PC-3 (cell line): ENCODE measurements at regions of chr6 and their contacts with region 1.

Region 1: GRCh38 chr6:52162940-52163908 is 23.0 kb upstream of the IL17A start:
- DNase-seq: peak; percentile 75
- ATAC-seq: peak; percentile 86
- H3K4me3 ChIP-seq: no peak overlapping the region
- H3K27ac ChIP-seq: no peak overlapping the region
- H3K4me1 ChIP-seq: no peaks in the 10 kb centered on the region
- H3K27me3 ChIP-seq: 0 out of 2 replicates have a peak, but pooled peaks cover 4% of the 10 kb centered on the region
- CTCF ChIP-seq: peak; percentile 89

Region 2: GRCh38 chr6:51450248-51450957 is 712.8 kb before region 1 on chr6:
- CTCF ChIA-PET with region 1: no interaction called
- POLR2A ChIA-PET with region 1: no interaction called
- intact Hi-C with region 1: no loop called
- DNase-seq: no peak
- ATAC-seq: no peak
- H3K4me3 ChIP-seq: no peak overlapping the region
- H3K27ac ChIP-seq: no peak overlapping the region
- H3K4me1 ChIP-seq: no peaks in the 10 kb centered on the region
- H3K27me3 ChIP-seq: peaks cover 36% of the 10 kb centered on the region
- CTCF ChIP-seq: no peak

Region 3: DNA sequence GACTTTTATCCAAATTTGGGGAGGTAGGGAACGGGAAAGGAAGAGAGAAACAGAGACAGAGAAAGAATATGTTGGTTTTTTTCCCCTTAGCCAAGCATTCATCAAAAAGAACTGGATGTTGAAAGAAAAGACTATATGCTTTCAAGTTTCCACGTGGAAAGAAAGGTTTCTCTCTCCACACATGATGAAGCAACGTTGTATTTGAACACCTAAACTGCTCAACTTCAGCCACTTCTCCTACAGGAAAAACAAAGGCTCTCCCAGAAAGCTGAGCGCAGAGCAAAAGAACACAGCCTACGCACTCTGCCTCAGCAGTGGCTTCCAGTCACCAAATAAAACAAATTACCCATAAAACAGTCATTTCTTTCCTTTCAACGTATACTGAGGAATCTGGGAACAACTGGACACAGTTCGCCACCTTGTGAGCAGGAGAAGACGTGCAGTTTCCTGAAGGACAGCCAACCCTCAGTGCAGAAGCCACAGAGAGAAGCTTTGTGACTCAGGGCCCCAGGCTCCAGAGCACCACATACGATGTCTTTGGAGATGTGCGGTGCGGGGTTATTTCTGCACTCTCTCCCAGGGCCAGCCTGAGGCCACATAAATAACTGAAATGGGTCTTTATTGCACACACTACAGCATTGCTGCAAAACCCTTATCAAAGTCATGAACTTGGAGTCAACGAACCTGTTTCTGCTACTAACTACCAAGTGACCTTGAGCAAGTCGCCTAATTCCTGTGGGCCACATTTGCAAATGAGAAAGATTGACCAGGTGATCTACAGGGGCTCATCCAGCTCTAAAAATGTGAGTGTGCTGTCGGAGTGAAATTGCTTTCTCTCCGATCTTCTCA is 71.0 kb after region 1 on chr6:
- CTCF ChIA-PET with region 1: interaction called, 3 read pairs
- POLR2A ChIA-PET with region 1: no interaction called
- intact Hi-C with region 1: loop called (anchors 1 kb)
- DNase-seq: peak; percentile 90
- ATAC-seq: peak; percentile 100
- H3K4me3 ChIP-seq: peak overlapping the region; percentile 40; the same call in 1 of the 2 replicates
- H3K27ac ChIP-seq: no peak overlapping the region
- H3K4me1 ChIP-seq: peaks cover 6% of the 10 kb centered on the region; the same call in 1 of the 2 replicates
- H3K27me3 ChIP-seq: peaks cover 19% of the 10 kb centered on the region
- CTCF ChIP-seq: peak; percentile 83

Region 4: GRCh38 chr6:52263709-52264540 is 100.7 kb after region 1 on chr6:
- CTCF ChIA-PET with region 1: no interaction called
- POLR2A ChIA-PET with region 1: no interaction called
- intact Hi-C with region 1: loop called (anchors 1 kb)
- DNase-seq: peak; percentile 76
- ATAC-seq: peak; percentile 62
- H3K4me3 ChIP-seq: no peak overlapping the region
- H3K27ac ChIP-seq: no peak overlapping the region
- H3K4me1 ChIP-seq: peaks cover 15% of the 10 kb centered on the region
- H3K27me3 ChIP-seq: no peaks in the 10 kb centered on the region
- CTCF ChIP-seq: peak; percentile 94

Region 5: DNA sequence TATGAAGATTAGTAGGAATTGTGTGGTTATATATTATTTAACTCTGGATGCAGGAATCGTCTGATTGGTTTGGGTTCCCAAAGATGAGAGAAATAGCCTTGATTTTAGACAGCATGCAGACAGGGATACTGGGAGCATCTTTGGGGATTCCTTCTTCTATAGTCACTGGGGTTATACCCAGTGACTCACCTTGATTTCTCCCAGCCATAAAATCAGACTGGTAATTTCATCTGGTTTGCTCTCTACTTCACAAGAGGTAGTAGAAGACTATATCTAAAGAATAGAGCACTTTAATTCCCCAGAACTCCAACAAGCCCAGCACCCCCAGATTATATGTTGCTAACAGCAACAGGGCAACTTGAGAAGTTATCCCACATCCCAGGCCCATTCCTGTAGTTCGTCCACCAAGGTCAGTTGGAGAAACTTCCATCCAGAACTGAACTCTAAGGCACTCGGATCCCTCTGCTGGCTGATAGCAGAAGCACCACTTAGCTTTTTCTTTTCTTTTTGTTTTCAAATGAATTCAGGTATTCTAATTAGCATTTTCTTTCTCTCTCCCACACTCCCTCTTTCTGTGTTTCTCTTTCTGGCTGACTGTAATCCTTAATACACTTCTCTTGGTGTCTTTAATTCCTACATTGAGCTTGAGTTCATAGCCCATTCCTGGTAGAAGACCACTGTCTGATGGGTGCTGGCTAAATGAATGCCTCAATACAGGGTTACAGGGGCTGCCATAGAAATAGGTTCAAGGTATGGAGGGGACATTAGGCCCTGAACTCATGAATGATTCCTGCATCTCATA is 236.5 kb after region 1 on chr6:
- CTCF ChIA-PET with region 1: no interaction called
- POLR2A ChIA-PET with region 1: no interaction called
- intact Hi-C with region 1: loop called (anchors 1 kb)
- DNase-seq: peak; percentile 72
- ATAC-seq: peak; percentile 83
- H3K4me3 ChIP-seq: no peak overlapping the region
- H3K27ac ChIP-seq: no peak overlapping the region
- H3K4me1 ChIP-seq: peaks cover 14% of the 10 kb centered on the region
- H3K27me3 ChIP-seq: no peaks in the 10 kb centered on the region
- CTCF ChIP-seq: peak; percentile 97

Region 6: GRCh38 chr6:52937908-52938307 is 774.7 kb after region 1 on chr6:
- CTCF ChIA-PET with region 1: no interaction called
- POLR2A ChIA-PET with region 1: no interaction called
- intact Hi-C with region 1: no loop called
- DNase-seq: peak; percentile 57
- ATAC-seq: peak; percentile 50; the same call in 1 of the 2 replicates
- H3K4me3 ChIP-seq: no peak overlapping the region
- H3K27ac ChIP-seq: no peak overlapping the region
- H3K4me1 ChIP-seq: no peaks in the 10 kb centered on the region; the same call in 1 of the 2 replicates
- H3K27me3 ChIP-seq: no peaks in the 10 kb centered on the region
- CTCF ChIP-seq: no peak